ENCODE measurements at regions of chr3 and their contacts with region 1.

Region 1: DNA sequence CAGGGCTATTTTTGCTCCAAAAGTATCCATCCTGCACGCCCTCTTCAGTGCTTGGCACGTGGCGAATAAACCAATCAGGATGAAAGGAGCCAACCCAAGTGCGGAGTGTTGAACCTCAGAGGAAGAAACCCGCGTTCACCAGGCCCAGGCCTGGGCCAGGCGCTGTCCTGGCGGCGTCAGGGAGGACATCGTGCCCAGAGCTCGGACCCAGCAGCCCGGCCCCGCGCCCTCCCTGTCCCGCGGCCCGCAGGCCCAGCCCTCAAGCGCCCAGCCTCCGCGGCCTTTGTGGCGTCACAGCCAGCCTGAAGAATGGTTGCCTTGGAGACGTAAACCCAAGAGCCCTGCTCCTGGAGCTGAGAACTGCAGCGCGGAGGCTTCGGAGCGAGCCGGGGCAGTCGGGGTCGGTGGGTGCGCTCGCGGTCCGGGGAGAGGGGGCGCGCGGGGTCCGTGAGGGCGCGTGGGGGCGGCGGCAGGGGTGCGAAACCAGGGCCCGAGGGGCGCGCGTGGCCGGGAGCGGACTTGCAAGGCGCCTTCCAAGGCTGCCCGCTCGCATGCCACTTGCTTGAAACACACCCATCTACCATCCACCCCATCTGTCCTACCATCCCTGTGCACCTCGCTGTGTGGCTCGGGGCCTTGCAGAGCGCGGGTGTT is at the start of gene CFAP100:
- DNase-seq: peak; percentile 68 to 89 (median 81)
- ATAC-seq: peak; percentile 78 to 82
- H3K4me3 ChIP-seq: peak within 1 kb of the TSS; percentile 9
- H3K27ac ChIP-seq: no peak within 1 kb of the TSS
- H3K4me1 ChIP-seq: no peaks in the 10 kb centered on the region
- H3K27me3 ChIP-seq: no peaks in the 10 kb centered on the region
- total RNA-seq, gene CFAP100: not detected

Region 2: DNA sequence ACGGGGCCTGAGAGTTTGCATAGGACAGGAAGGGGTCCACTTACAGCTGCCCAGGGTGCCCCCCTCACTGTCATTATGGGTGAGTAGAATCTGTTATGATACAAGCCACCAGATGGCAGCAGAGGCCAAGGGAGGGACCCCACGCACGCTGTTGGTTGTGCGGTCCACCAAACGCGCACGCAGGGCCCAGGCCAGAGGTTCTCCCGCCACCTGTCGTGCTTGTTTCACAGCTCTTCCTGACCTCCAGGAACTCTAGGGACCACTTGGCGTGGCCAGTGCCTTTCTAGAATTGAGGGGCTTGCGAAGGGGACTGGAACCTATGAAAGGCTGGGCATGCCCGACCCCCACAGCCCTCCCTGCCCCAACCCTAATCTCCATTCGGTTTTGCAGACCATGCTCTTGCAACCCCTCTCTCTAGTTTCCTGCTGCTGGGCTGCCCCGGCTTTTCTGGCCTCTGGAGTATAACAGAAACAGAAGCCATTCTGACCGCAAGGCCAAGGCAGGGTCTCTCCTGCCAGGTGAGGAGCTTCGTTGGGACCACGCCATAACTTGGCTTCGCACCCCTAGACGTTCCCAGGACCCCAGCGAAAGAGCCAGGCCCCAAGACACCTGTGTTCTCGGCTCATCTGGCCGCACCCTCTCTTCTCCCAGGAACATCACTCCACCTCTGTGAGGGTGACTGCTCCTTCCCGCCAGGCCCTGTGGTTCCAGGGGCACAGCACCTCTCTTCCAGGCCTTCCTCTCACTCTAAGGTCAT is 260.3 kb before region 1 on chr3:
- intact Hi-C with region 1: loop called in 3 of 4 experiments (anchors 5 to 10 kb)
- DNase-seq: peak; percentile 66 to 84 (median 77)
- ATAC-seq: peak; percentile 70 to 82
- H3K4me3 ChIP-seq: no peak overlapping the region
- H3K27ac ChIP-seq: no peak overlapping the region
- H3K4me1 ChIP-seq: no peaks in the 10 kb centered on the region
- H3K27me3 ChIP-seq: no peaks in the 10 kb centered on the region

Region 3: DNA sequence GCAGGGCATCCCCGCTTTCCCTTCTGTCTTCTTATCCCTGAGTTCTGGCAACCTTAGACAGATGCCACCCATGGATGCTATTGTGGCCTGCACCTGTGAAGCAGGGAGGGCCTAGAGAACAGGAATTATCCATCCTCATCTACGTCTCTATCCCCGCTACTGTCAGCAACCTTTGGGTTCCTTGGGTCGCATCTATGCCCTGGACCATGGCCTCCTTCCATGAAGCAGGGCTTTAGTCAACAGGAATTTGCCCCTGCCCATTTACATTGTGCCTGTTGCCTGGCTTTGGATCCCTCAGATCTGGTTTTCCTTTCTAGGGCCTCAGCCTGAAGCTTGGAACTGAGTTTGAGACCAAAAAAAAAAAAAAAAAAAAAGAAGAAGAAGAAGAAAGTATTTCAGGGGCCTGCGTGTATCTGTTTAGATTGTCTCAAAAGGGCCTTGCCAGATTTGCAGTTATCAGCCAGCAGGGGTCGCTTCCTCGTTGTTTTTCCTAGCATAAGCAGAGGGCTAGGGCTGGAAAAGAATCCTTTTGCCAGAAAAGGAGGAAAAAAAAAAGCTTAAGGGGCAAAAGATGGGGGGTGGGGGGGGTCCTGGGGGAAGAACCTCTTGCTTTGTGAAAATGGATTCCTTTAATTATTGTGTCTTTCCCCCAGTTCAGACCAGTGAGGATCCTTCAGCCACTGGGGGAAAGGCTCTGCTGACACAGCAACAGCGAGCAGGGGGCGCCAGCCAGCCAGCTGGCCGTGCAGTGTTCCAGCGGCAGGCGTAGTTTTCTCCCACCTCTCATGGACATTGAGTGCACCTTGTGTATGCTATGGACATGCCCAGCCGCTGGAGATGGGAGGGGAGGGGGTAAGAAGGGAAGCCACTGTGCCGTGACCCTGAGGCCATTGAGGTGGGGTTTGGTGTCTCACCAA is 148.6 kb before region 1 on chr3:
- intact Hi-C with region 1: loop called in 1 of 4 experiments (anchors 5 kb)
- DNase-seq: peak; percentile 62 to 85 (median 77)
- ATAC-seq: peak; percentile 83 to 88
- H3K4me3 ChIP-seq: no peak overlapping the region
- H3K27ac ChIP-seq: no peak overlapping the region
- H3K4me1 ChIP-seq: no peaks in the 10 kb centered on the region
- H3K27me3 ChIP-seq: no peaks in the 10 kb centered on the region

Region 4: GRCh38 chr3:126259411-126260391 is 135.0 kb before region 1 on chr3:
- intact Hi-C with region 1: loop called (anchors 2 to 5 kb)
- DNase-seq: peak; percentile 50 to 90 (median 88)
- ATAC-seq: peak; percentile 77 to 79
- H3K4me3 ChIP-seq: no peak overlapping the region
- H3K27ac ChIP-seq: no peak overlapping the region
- H3K4me1 ChIP-seq: no peaks in the 10 kb centered on the region
- H3K27me3 ChIP-seq: no peaks in the 10 kb centered on the region